Sigmoid colon (tissue), 7 donors: ENCODE measurements at regions of chr14 and their contacts with region 1.

Region 1: DNA sequence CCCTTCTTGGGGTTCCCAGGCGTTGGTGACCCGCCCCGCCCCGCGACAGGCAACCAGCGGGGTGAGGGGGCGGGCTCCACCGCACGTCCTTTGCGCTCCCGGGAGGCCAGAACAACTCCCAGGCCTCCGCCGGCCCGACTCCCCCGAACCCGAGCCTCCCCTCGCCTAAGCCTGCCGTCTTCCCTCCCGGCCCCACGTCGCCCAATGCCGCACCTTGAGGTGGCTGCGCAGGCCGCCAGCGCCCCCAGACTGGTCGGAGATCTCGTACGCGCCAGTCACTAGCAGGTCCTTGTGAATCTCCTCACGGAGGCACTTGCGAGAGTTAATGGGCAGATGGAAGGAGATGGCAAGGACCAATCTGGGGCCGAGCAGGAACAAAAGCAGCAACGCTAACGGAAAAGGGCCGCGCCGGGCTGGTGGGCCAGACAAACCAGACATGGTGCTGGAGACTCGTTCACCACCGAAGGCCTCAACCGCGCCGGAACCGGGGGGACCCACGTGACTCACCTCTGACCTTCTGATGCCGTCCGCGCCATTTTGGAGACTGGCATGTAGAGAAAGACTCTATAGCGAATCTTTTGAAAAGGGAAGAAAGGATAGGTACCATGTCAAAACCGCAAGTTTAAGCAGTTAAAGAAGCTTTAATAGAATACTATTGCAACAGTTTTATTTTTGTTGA is at the start of gene TMED10:
- DNase-seq: peak; percentile 96
- H3K4me3 ChIP-seq: peak within 1 kb of the TSS; percentile 84 to 98 (median 90)
- H3K27ac ChIP-seq: peak within 1 kb of the TSS; percentile 97 to 99 (median 98)
- H3K4me1 ChIP-seq: peaks cover 0 to 33% (median 21%) of the 10 kb centered on the region in 4 donors
- H3K27me3 ChIP-seq: no peaks in the 10 kb centered on the region
- CTCF ChIP-seq: no peak
- EP300 ChIP-seq: peak in 1 of 4 donors; percentile 32
- POLR2A ChIP-seq: peak; percentile 66 to 67
- total RNA-seq, gene TMED10: 107 to 175 (median 165) TPM

Region 2: DNA sequence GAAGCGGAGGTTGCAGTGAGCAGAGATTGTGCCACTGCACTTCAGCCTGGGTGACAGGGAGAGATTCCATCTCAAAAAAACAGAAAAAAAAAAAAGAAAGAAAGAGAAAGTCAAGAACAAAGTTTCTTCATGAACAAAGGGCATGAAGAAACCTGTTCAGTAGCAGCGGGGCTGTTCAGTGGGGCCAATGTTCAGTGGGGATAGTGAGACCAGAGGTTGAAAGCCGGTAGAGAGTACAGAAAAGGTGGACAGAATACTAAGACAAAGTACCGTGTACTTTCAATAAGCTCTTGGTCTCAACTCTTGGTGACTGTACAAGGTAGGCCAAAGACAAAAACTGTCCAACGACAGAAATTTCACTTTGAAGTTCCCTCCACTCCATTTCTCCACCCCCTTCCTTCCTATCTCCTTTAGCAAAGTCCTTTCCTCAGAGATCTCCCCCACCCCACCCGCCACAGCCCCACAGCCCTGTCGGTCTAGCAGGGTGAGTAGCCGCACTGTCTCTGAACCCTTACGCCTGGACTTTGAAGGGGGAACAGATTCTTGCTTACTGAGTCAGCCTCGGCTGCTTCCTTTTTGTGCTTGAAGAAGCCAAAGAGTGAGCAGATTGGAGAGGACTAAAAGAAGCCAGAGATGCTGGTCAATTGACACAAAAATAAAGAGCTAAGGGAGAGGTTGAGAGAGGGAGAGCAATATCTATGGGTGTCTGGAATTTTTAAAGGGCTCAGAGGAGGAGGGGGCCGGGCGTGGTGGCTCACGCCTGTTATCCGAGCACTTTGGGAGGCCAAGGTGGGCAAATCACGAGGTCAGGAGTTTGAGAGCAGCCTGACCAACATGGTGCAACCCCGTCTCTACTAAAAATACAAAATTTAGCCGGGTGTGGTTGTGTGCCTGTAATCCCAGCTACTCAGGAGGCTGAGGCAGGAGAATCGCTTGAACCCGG is 58.2 kb after region 1 on chr14:
- intact Hi-C with region 1: loop called (anchors 2 kb)
- DNase-seq: peak; percentile 83
- H3K4me3 ChIP-seq: no peak overlapping the region
- H3K27ac ChIP-seq: peak overlapping the region in 3 of 4 donors; percentile 17 to 86 (median 38)
- H3K4me1 ChIP-seq: peaks cover 0 to 30% (median 25%) of the 10 kb centered on the region in 4 donors
- H3K27me3 ChIP-seq: no peaks in the 10 kb centered on the region
- CTCF ChIP-seq: no peak
- EP300 ChIP-seq: no peak
- POLR2A ChIP-seq: no peak

Region 3: DNA sequence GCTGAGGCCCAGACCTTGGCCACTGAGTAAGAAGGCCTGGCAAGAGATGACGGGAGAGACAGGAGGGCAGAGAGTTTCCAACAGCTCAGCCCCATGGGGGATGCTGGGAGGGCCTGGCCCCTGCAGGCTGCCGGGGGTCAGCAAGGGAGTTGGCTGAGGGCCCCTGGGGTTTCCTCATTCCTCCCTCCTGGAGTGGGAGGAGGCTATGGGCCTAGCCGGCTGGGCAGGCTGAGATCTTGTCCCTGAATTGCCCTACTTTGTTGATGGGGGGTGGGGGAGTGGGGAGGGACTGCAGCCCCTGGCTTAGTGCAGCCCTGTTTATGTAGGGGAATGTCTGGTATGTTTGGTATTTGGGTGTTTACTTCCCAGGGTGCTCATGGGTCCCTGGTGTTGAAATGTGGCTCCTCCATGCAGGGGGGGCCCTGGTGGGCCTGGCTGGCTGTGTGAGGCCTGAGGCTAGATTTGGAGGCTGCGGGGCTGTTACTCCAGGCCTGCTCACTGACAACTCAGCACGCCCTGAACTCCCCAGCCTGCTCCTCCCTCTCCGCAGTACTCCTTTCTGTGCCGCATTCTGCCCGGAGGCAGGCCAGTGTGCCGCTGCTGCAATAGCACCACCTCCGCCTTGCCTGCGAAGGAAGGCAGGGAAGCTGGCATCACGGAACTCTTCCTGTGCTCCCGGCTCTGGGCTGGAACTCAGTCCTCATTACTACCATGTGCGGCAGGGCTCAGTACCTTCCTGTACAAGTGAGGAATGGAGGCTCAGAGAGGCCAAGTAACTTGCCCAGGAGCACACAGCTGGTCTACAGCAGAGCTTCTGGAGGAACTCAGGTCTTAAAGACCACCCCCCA is 276.8 kb after region 1 on chr14:
- intact Hi-C with region 1: no loop called
- DNase-seq: peak; percentile 92
- H3K4me3 ChIP-seq: no peak overlapping the region
- H3K27ac ChIP-seq: peak overlapping the region; percentile 74 to 86 (median 85)
- H3K4me1 ChIP-seq: peaks cover 0 to 96% (median 90%) of the 10 kb centered on the region in 4 donors
- H3K27me3 ChIP-seq: no peaks in the 10 kb centered on the region
- CTCF ChIP-seq: no peak
- EP300 ChIP-seq: peak in 1 of 4 donors; percentile 41
- POLR2A ChIP-seq: no peak